Panc1 (cell line): ENCODE measurements at regions of chr1 and their contacts with region 1.

Region 1: DNA sequence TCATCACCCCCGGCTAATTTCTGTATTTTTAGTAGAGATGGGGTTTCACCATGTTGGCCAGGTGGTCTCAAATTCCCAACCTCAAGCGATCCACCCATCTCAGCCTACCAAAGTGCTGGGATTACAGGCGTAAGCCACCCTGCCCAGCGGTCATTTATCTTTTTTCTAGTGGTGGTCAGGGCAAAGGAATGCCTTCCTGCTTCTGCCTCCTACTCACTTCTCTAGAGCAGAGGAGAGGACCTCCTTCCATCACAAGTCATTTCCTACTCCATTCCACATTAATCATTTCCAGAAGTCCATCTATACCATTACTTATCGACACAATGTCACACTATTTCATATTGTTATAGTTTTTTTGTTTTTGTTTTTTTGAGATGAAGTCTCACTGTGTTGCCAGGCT is 13.3 kb downstream of the FBXO42 start:
- DNase-seq: no peak
- ATAC-seq: no peak
- H3K4me3 ChIP-seq: no peak overlapping the region
- H3K27ac ChIP-seq: no peak overlapping the region
- H3K4me1 ChIP-seq: peaks cover 9% of the 10 kb centered on the region
- H3K27me3 ChIP-seq: no peaks in the 10 kb centered on the region
- CTCF ChIP-seq: no peak

Region 2: DNA sequence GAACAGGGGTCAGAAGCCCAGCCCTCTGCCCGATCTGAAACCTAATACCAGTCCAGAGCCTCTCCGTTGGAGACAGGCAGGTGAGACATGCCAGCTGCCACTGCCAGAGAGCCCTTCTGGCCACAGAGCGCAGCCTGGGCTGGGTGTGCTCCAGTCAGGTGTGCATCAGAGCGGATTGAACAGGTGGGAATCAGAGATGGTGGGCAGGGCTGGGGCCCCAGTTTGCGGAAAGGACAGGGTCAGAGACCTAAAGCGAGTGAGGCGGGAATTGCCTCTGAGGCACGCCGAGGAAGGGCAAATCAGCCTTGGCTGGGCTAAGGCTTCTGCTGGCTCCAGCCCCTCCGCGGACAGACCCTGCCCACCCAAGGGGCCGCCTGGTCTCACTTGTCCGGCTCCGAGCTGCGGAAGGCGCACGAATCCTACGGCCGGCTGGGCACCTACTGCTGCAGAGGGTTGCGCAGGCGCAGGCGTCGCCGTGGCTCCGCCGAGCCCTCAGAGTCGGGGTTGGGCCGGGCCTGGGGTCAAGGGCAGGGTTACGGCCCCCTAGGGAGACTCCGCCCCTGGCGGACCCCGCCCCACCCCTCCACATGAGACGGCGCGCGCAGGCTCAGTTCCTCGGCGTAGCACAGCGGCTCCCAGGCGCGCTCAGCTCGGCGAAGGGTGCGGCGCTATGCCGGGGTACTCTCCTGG is 112.3 kb before region 1 on chr1:
- CTCF ChIA-PET with region 1: interaction called, 19 read pairs
- POLR2A ChIA-PET with region 1: no interaction called
- in situ Hi-C with region 1: no loop called
- intact Hi-C with region 1: no loop called
- DNase-seq: no peak
- ATAC-seq: no peak
- H3K4me3 ChIP-seq: no peak overlapping the region
- H3K27ac ChIP-seq: no peak overlapping the region
- H3K4me1 ChIP-seq: no peaks in the 10 kb centered on the region
- H3K27me3 ChIP-seq: no peaks in the 10 kb centered on the region
- CTCF ChIP-seq: no peak